ENCODE measurements at regions of chr12 and their contacts with region 1.

Region 1: DNA sequence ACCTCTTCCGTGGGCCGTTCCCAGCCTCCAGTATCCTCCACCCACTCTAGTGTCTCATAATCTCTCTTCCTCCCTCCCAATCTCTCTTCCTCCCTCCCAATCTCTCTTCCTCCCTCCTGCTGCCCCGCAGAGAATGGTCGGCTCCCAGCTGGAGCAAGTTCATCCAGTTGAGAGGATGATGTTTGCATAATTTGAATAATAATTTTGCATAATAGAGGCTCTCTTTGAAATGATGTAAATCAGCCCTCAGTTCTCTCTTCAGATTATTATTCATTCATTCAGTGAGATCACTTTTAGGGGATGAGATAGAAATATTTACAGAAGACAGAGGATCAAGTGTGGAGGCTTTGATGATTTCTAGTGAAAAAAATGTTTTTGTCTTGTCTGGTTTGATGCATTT is 125.0 kb downstream of the PTPN11 start:
- DNase-seq: no peak
- H3K4me3 Mint-ChIP-seq: no peak overlapping the region
- H3K27ac Mint-ChIP-seq: no peak overlapping the region
- H3K4me1 Mint-ChIP-seq: no peaks in the 10 kb centered on the region
- H3K27me3 Mint-ChIP-seq: peaks cover 4% of the 10 kb centered on the region

Region 2: DNA sequence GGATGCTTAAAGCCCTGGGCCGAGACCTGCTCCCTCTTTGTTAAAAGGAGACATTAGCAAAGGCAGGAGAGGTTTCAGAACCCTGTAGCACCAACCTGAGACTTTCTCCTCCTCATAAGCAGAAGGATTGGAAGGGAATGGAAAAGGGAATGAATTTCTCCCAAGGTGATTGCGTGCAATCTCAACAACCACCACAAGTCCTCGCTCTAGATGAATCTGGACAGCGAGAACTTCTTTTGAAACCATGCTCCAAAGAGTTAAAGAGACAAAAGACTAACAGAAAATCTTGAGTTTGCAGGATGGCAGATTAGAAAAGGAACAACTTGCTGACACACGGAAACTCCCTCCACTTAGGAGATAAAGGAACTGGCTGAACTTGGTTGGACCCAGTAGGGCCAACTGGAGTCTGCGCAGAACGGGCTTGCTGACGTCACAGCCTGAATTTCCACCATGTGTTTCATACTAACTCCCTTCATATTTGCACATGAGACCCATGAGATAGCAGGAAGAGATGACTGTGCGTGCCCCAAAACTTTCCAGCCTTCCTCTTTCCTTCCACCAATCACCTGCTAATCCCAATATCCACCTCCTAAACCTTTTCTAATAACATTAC is 12.0 kb after region 1 on chr12:
- intact Hi-C with region 1: loop called (anchors 1 kb)
- DNase-seq: no peak
- H3K4me3 Mint-ChIP-seq: no peak overlapping the region
- H3K27ac Mint-ChIP-seq: no peak overlapping the region
- H3K4me1 Mint-ChIP-seq: no peaks in the 10 kb centered on the region
- H3K27me3 Mint-ChIP-seq: peaks cover 3% of the 10 kb centered on the region

Measured in activated CD4-positive, alpha-beta T cell treated with anti-CD3 and anti-CD28 coated beads, Interleukin-2, amount 10 ng/mL, durations not matched to agents 24 days and 14 days (primary cell).